IMR-90 (cell line): ENCODE measurements at regions of chr7 and their contacts with region 1.

Region 1: GRCh38 chr7:48259463-48260280 is 88.4 kb downstream of the ABCA13 start:
- DNase-seq: no peak
- ATAC-seq: no peak
- H3K4me3 ChIP-seq: no peak overlapping the region
- H3K27ac ChIP-seq: no peak overlapping the region
- H3K4me1 ChIP-seq: no peaks in the 10 kb centered on the region; the same call in 1 of the 2 replicates
- H3K27me3 ChIP-seq: no peaks in the 10 kb centered on the region
- CTCF ChIP-seq: no peak
- POLR2A ChIP-seq: no peak
- RAD21 ChIP-seq: no peak

Region 2: DNA sequence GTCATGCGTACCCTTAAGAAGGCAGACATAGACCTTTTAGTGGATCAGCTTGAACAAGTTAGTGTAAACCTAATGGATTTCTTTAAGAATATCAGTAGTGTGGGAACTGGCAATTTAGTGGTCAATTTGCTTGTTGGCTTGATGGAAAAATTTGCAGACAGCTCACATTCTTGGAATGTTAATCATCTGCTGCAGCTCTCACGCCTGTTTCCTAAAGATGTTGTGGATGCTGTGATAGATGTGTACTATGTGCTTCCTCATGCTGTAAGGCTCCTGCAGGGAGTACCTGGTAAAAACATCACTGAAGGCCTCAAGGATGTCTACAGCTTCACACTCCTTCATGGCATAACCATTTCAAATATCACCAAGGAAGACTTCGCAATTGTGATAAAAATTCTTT is 15.0 kb after region 1 on chr7:
- CTCF ChIA-PET with region 1: no interaction called
- POLR2A ChIA-PET with region 1: no interaction called
- dilution Hi-C with region 1: no loop called
- in situ Hi-C with region 1: no loop called
- intact Hi-C with region 1: loop called (anchors 1 kb)
- DNase-seq: peak; percentile 37
- ATAC-seq: no peak
- H3K4me3 ChIP-seq: no peak overlapping the region
- H3K27ac ChIP-seq: no peak overlapping the region
- H3K4me1 ChIP-seq: no peaks in the 10 kb centered on the region; the same call in 1 of the 2 replicates
- H3K27me3 ChIP-seq: no peaks in the 10 kb centered on the region
- CTCF ChIP-seq: no peak
- POLR2A ChIP-seq: no peak
- RAD21 ChIP-seq: no peak